Cardiac septum (tissue), 1 donor: ENCODE measurements at regions of chr16 and their contacts with region 1.

Region 1: DNA sequence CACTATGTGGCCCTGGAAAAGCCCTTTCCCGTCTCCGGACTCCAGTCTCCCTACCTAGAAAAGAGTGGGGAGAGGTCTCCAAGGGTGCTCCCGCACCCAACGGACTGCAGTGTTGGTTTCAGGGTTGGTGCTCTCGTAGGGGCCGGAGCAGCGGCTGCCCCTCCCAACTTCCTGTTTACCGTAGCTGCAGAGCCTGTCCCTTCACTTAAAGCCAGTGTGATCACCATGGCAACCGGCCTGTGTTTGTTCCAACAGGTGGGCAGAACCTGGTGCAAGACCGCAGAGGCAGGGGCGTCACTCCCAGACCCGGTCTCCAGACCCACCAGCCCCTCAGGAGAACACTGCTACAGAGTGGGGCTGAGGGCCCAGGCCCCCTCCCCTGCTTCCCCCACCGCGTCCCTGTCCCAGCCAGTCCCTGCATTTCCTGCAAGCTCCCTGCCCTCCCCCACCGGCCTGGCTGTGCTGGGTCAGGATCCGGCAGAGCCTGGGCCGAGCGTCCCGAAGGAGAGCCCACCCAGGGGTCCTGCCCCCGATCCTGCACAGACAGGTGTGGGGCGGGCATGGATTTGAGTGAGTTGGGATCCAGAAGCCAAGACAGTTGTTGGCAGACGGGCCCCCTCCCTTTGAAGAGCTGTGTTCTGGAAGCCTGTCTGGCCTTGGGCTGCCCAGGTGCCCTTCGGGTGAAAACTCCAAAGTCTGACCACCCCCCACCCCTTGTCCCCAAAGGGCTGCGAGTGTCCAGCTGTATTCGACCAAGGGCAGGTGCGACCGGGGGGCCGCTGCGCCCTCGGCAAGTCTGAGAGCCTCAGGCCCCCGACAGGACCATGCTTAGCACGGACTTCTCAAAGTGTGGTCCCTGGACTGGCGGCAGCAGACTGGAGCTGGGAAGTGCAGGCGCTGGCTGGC is 1.5 kb upstream of the BAIAP3 start:
- DNase-seq: no peak

Region 2: GRCh38 chr16:1244881-1245280 is 87.1 kb before region 1 on chr16:
- intact Hi-C with region 1: no loop called
- DNase-seq: no peak

Region 3: DNA sequence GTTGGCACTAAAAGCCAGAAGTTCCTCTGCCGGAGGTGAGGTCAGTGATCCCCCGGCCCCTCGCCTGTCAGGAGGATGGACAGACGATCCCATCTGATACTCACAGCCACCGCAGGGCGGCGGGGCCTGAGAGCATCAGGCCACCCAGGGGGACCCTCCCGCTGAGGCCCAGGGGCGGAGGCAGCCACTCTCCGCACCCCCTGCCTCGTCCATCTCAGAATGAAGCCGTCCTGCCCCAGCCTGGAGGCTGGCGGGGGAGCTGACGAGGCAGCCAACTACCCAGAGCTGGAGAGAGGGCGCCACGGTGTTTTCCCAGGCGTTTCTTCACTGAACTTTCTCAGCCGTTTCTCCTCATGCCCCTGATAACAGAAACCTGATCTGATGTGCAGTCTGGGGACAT is 53.5 kb before region 1 on chr16:
- intact Hi-C with region 1: loop called (anchors 10 kb)
- DNase-seq: no peak

Region 4: DNA sequence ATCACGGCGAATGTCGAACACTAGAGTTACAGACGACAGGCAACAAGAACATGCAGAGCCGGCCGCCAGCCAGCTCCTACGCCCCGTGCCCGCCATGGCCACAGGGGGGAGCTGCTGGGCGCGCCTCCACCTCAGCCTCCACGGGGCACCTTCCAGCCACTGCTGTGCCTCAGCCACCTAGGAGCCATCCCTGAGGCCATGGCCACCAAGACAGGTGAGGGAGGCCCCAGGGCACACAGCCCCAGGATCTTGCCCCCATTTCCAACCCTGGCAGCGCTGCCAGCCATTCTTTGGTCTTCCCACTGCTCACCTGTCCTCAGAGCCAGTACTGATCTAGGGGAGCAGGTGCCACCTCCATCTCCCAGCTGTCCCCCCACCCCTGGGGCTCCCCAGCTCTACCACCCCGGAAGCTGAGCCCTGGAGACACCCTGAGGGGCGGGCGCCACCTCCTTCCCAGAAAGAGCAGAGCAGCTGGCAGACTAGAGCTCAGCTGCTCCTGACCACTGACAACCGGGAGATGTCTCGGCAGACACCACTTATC is 31.6 kb after region 1 on chr16:
- intact Hi-C with region 1: no loop called
- DNase-seq: peak; percentile 84